ENCODE measurements at regions of chr14 and their contacts with region 1.

Region 1: GRCh38 chr14:65169351-65169750 is 67.0 kb upstream of the MAX start:
- DNase-seq: peak in 1 of 2 donors; percentile 10
- ATAC-seq: peak in 7 of 8 donors; percentile 54 to 85 (median 71)
- H3K4me3 ChIP-seq: no peak overlapping the region
- H3K27ac ChIP-seq: peak overlapping the region in 6 of 10 donors; percentile 17 to 58 (median 47)
- H3K4me1 ChIP-seq: peaks cover 0 to 25% (median 7%) of the 10 kb centered on the region in 9 donors
- H3K27me3 ChIP-seq: peaks cover 0 to 24% (median 12%) of the 10 kb centered on the region in 7 donors
- CTCF ChIP-seq: no peak

Region 2: GRCh38 chr14:65949711-65950516 is 780.6 kb after region 1 on chr14:
- intact Hi-C with region 1: loop called in 9 of 10 experiments (anchors 5 to 10 kb)
- DNase-seq: peak; percentile 37 to 39
- ATAC-seq: peak in 7 of 8 donors; percentile 29 to 86 (median 69)
- H3K4me3 ChIP-seq: no peak overlapping the region
- H3K27ac ChIP-seq: no peak overlapping the region
- H3K4me1 ChIP-seq: peaks cover 0 to 7% (median 0%) of the 10 kb centered on the region in 9 donors
- H3K27me3 ChIP-seq: peaks cover 0 to 8% (median 0%) of the 10 kb centered on the region in 7 donors
- CTCF ChIP-seq: no peak